ENCODE measurements at regions of chr19 and their contacts with region 1.

Region 1: DNA sequence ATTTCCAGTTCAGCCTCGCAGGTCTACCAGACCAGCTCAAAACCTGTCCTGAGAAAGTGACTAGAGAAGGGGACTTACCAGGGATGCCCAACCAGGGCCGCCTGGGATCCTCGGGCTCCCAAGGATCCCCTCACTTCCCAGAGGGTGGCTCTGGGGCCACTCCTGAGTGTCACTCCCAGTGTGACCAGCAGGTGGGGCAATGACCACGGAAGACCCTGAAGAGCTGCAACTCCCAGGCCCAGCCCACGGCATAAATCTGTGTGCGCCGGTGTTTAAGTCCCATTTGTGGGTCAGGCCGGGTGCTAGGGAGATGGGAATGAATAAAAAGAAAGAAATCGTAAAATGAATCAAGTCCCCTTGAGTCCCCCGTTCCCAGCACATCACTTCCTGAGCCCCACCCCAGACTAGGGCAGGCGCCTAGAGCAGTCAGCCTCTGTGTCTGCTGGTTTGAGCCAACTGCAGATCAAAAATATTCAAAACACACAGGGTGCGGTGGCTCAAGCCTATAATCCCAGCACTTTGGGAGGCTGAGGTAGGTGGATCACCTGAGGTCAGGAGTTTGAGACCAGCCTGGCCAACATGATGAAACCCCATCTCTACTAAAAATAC is 10.7 kb downstream of the PTGIR start:
- DNase-seq: peak; percentile 92
- ATAC-seq: peak; percentile 55
- H3K4me3 Mint-ChIP-seq: peak overlapping the region; percentile 32
- H3K27ac Mint-ChIP-seq: peak overlapping the region; percentile 89
- H3K4me1 Mint-ChIP-seq: peaks cover 72% of the 10 kb centered on the region
- H3K27me3 Mint-ChIP-seq: no peaks in the 10 kb centered on the region
- CTCF ChIP-seq: peak; percentile 96

Region 2: DNA sequence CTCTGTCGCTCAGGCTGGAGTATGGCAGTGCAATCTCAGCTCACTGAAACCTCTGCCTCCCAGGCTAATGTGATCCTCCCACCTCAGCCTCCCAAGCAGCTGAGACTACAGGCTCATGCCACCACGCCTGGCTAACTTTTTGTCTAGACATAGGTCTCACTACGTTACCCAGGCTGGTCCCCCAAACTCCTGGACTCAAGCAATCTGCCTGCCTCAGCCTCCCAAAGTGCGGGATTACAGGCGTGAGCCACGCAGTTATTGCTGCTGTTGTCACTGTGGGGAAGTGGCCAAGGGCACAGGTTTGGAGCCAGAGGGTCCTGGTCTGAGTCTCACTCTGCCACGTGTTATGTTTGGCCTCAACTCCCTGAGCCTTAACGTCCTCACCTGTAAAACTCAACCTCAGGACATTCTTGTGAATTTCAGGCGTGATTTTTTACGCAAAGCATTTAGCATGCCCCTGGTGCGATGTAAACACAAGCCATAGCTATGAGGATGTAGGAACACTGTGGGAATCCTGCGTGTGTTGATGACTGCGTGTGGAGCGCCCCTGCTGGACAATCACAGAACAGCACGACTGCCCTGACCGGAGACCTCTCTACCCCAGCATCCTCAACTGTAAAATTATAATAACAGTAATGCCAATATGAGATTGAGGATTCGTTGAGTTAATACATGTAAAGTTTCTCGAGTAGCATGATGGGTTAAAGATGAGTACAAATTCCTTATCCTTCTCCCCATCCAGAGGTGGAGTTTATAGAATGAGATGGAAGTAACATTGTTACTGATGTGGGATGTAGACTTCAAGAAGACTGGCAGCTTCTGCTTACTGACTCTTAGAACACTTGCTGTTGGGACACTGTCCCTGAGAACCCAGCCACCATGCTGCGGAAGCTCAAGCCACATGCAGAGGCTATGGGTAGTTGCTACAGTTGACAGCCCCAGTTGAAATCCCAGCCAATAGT is 76.8 kb before region 1 on chr19:
- CTCF ChIA-PET with region 1: interaction called, 10 read pairs
- POLR2A ChIA-PET with region 1: no interaction called
- intact Hi-C with region 1: no loop called
- DNase-seq: peak; percentile 77
- ATAC-seq: peak; percentile 83
- H3K4me3 Mint-ChIP-seq: no peak overlapping the region
- H3K27ac Mint-ChIP-seq: no peak overlapping the region
- H3K4me1 Mint-ChIP-seq: no peaks in the 10 kb centered on the region
- H3K27me3 Mint-ChIP-seq: peaks cover 1% of the 10 kb centered on the region
- CTCF ChIP-seq: peak; percentile 99

Region 3: DNA sequence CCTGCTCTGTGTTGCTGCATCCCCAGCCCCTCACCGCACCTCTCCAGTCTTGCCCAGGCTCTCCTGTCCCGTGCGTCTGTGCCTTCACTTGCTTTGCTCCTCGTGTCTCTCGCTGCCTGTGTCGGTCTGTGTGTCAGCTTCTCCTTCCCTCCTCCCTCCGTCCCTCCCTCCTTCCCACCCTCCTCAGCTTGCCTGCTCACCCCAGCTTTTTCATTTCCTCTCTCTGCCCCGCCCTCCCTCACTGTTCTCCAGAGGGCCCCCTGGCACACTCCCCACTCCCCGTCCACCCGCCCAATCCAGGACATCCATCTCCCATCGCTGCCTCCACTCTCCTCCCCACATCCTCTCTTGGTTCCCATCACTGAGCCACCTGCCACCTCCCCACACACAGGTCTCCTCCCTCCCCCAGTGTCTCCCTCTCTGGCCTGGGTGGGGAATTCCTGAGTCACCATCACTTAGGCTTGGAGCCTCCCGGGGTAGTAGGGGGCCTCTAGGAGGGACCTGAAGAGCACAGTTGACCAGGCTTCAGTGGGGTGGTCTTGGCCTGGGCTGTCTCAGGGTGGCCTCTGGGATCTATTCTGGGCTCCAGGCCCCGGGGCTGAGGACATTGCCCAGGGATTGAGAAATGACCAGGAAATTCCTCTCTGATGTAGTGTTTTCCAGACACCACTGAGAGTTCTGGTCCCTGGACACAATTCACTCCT is 10.9 kb after region 1 on chr19 and contains the start of gene PTGIR:
- CTCF ChIA-PET with region 1: interaction called, 68 read pairs
- POLR2A ChIA-PET with region 1: interaction called, 232 read pairs
- intact Hi-C with region 1: no loop called
- DNase-seq: peak; percentile 62
- ATAC-seq: peak; percentile 64
- H3K4me3 Mint-ChIP-seq: peak within 1 kb of the TSS; percentile 96
- H3K27ac Mint-ChIP-seq: peak within 1 kb of the TSS; percentile 96
- H3K4me1 Mint-ChIP-seq: peaks cover 49% of the 10 kb centered on the region
- H3K27me3 Mint-ChIP-seq: peaks cover 3% of the 10 kb centered on the region
- CTCF ChIP-seq: no peak
- total RNA-seq, gene PTGIR: 45.4 to 48.8 TPM

Region 4: GRCh38 chr19:46634045-46634655 is 19.9 kb after region 1 on chr19:
- CTCF ChIA-PET with region 1: interaction called, 68 read pairs
- POLR2A ChIA-PET with region 1: interaction called, 116 read pairs
- intact Hi-C with region 1: no loop called
- DNase-seq: peak; percentile 98
- ATAC-seq: peak; percentile 74
- H3K4me3 Mint-ChIP-seq: peak overlapping the region; percentile 82
- H3K27ac Mint-ChIP-seq: peak overlapping the region; percentile 66
- H3K4me1 Mint-ChIP-seq: peaks cover 18% of the 10 kb centered on the region
- H3K27me3 Mint-ChIP-seq: no peaks in the 10 kb centered on the region
- CTCF ChIP-seq: no peak

Measured in activated CD8-positive, alpha-beta T cell treated with anti-CD3 and anti-CD28 coated beads for 36 hours (primary cell).